Dendritic cell treated with granulocyte-macrophage colony-stimulating factor and Interleukin-4, amounts not matched to agents 40 ng/mL and 50 ng/mL, for 4 days (primary cell): ENCODE measurements at regions of chr20 and their contacts with region 1.

Region 1: GRCh38 chr20:40160097-40160550 is 528.9 kb downstream of the MAFB start:
- H3K4me3 Mint-ChIP-seq: no peak overlapping the region
- H3K27ac Mint-ChIP-seq: no peak overlapping the region
- H3K4me1 Mint-ChIP-seq: peaks cover 32% of the 10 kb centered on the region
- H3K27me3 Mint-ChIP-seq: peaks cover 14% of the 10 kb centered on the region

Region 2: GRCh38 chr20:39885975-39886649 is 274.0 kb before region 1 on chr20:
- intact Hi-C with region 1: loop called (anchors 5 kb)
- H3K4me3 Mint-ChIP-seq: peak overlapping the region; percentile 44
- H3K27ac Mint-ChIP-seq: peak overlapping the region; percentile 81
- H3K4me1 Mint-ChIP-seq: peaks cover 27% of the 10 kb centered on the region
- H3K27me3 Mint-ChIP-seq: peaks cover 9% of the 10 kb centered on the region

Region 3: GRCh38 chr20:40110311-40110831 is 49.8 kb before region 1 on chr20:
- intact Hi-C with region 1: no loop called
- H3K4me3 Mint-ChIP-seq: no peak overlapping the region
- H3K27ac Mint-ChIP-seq: no peak overlapping the region
- H3K4me1 Mint-ChIP-seq: no peaks in the 10 kb centered on the region
- H3K27me3 Mint-ChIP-seq: peaks cover 18% of the 10 kb centered on the region

Region 4: DNA sequence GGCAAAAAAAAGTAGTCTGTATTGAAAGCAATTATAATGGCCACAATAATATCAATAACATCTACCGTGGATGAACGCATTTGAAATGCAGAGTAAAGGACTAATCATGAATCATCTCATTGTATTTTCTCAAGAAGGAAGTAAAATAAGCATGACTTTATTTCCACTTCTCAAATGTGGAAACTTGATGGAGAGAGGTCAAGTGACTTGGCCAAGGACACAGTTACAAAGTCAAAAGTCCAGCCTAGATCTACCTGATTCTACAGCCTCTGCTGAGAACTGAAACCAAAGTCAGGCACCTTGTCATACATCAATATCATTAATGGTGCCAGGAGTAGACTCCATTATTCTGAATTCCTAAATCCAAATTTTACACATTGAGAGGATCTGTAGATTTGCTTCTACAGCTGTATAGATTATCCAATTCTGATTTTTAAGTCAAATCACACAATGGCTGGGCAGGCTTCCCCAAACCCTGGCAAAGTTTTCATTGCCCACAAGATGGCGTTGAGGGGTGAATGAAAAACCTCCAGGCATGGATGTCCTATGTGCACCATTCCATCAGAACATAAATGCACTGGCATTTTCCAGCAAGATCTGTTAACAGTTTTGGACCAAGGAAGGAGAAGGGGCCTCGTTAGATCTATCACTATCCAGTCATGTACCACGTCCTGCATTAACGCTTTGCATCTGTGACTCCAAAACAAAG is 105.9 kb after region 1 on chr20:
- intact Hi-C with region 1: loop called (anchors 10 kb)
- H3K4me3 Mint-ChIP-seq: no peak overlapping the region
- H3K27ac Mint-ChIP-seq: peak overlapping the region; percentile 39
- H3K4me1 Mint-ChIP-seq: peaks cover 73% of the 10 kb centered on the region
- H3K27me3 Mint-ChIP-seq: peaks cover 8% of the 10 kb centered on the region

Region 5: DNA sequence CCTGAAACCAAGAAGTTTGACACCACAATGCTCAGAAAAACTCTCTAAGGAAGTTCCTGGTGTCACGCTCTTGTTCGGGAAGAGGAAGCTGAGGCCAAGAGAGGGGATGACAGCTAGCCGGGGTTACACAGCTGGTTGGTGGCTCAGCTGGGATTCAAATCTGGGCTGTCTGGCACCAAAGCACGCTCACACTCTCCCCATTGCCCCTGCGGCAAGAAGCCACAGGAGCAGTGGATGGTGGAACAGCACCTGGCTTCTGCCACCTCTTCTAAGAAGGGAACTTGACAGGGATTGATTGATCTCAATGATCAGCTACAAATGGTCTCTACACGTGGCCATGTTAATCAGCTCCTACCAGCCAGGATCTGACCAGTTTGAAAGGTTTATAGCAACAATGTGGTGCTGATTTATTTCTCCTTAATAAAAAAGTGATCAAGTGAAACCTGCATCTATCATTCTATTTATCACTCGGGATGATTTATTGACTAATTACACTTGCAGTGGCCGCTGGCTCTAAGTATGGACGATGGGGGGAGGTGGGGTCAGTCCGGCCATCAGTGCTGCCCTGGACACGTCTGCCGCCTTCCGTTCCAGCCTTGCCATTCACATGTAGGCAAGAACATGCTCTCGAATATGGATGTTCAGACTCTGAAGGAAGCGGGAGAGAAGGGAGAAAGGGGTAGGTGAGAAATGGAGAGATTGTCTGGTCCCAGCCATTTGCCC is 796.6 kb after region 1 on chr20:
- intact Hi-C with region 1: loop called (anchors 10 kb)
- H3K4me3 Mint-ChIP-seq: peak overlapping the region; percentile 30
- H3K27ac Mint-ChIP-seq: peak overlapping the region; percentile 56
- H3K4me1 Mint-ChIP-seq: peaks cover 30% of the 10 kb centered on the region
- H3K27me3 Mint-ChIP-seq: no peaks in the 10 kb centered on the region